ENCODE measurements at regions of chr2 and their contacts with region 1.

Region 1: DNA sequence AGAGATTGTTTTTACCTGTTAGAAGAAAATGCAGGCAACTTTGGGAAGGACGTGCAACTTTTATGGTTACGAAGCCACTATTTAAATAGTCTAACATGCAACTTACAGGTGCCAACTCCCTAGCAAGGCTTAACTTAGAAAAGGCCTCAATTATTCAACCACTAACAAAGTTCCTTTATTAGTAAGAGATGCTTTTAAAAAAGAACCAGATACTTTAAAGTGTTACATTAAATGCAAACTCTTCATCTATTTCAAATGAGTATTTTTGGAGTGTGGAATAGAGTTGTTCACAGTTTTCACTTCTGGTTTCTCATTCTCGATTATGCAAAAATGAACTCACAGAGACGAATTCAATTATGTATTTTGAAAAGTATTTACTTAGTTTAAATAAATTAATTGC is 51.7 kb downstream of the PELI1 start:
- DNase-seq: peak; percentile 26
- ATAC-seq: no peak
- H3K4me3 ChIP-seq: peak overlapping the region in 2 of 5 experiments; percentile 6 to 38
- H3K4me3 Mint-ChIP-seq: peak overlapping the region; percentile 66
- H3K27ac ChIP-seq: peak overlapping the region; percentile 54 to 66
- H3K27ac Mint-ChIP-seq: peak overlapping the region; percentile 75
- H3K4me1 ChIP-seq: peaks cover 39 to 40% of the 10 kb centered on the region in 2 donors
- H3K4me1 Mint-ChIP-seq: peaks cover 58% of the 10 kb centered on the region
- H3K27me3 ChIP-seq: no peaks in the 10 kb centered on the region
- H3K27me3 Mint-ChIP-seq: no peaks in the 10 kb centered on the region
- CTCF ChIP-seq: no peak

Region 2: GRCh38 chr2:64035072-64035942 is 57.2 kb before region 1 on chr2:
- CTCF ChIA-PET with region 1: no interaction called
- POLR2A ChIA-PET with region 1: no interaction called
- intact Hi-C with region 1: no loop called
- DNase-seq: no peak
- ATAC-seq: no peak
- H3K4me3 ChIP-seq: no peak overlapping the region
- H3K4me3 Mint-ChIP-seq: no peak overlapping the region
- H3K27ac ChIP-seq: no peak overlapping the region
- H3K27ac Mint-ChIP-seq: no peak overlapping the region
- H3K4me1 ChIP-seq: peaks cover 5% of the 10 kb centered on the region in 2 donors
- H3K4me1 Mint-ChIP-seq: peaks cover 9% of the 10 kb centered on the region
- H3K27me3 ChIP-seq: no peaks in the 10 kb centered on the region
- H3K27me3 Mint-ChIP-seq: no peaks in the 10 kb centered on the region
- CTCF ChIP-seq: no peak

Region 3: DNA sequence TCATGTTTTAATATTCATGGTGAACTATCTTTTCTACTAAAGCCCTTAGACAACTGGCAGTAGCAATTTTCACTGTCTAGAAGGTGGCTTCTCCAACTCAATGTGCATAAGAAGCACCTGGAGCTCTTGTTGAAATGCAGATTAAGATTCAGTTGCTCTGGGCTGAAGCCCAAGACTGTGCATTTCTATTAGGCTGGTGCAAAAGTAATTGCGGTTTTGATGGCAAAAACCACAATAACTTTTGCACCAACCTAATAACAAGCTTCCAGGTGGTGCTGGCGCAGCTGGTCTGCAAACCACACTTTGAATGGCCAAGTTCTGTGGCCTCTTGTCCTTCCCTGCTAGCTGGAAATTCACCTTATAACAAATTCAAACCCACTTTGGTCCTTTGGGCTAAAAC is 46.6 kb before region 1 on chr2:
- CTCF ChIA-PET with region 1: interaction called, 7 read pairs
- POLR2A ChIA-PET with region 1: no interaction called
- intact Hi-C with region 1: loop called (anchors 5 kb)
- DNase-seq: no peak
- ATAC-seq: no peak
- H3K4me3 ChIP-seq: no peak overlapping the region
- H3K4me3 Mint-ChIP-seq: no peak overlapping the region
- H3K27ac ChIP-seq: no peak overlapping the region
- H3K27ac Mint-ChIP-seq: no peak overlapping the region
- H3K4me1 ChIP-seq: peaks cover 6 to 9% of the 10 kb centered on the region in 2 donors
- H3K4me1 Mint-ChIP-seq: peaks cover 8% of the 10 kb centered on the region
- H3K27me3 ChIP-seq: no peaks in the 10 kb centered on the region
- H3K27me3 Mint-ChIP-seq: no peaks in the 10 kb centered on the region
- CTCF ChIP-seq: no peak

Region 4: DNA sequence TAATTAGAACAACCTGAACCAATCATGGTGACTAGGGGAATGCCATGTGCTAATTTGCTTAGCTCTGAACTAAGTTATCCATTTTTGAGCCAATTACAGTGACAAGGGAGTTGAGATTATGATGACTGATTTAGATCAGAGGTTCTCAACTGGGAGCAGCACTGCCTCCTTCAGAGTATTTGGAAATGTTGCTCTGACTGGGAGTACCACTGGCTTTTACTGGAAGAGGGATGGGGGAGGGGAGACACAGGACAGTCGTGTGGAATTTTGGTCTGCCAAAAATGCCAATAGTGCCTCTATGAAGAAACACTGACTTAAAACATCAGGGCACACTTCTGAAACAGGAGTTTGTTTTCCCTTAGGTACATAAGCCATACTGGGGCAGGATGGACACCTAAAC is 25.2 kb before region 1 on chr2:
- CTCF ChIA-PET with region 1: interaction called, 4 read pairs
- POLR2A ChIA-PET with region 1: interaction called, 10 read pairs
- intact Hi-C with region 1: no loop called
- DNase-seq: no peak
- ATAC-seq: no peak
- H3K4me3 ChIP-seq: no peak overlapping the region
- H3K4me3 Mint-ChIP-seq: no peak overlapping the region
- H3K27ac ChIP-seq: no peak overlapping the region
- H3K27ac Mint-ChIP-seq: no peak overlapping the region
- H3K4me1 ChIP-seq: no peaks in the 10 kb centered on the region
- H3K4me1 Mint-ChIP-seq: peaks cover 16% of the 10 kb centered on the region
- H3K27me3 ChIP-seq: no peaks in the 10 kb centered on the region
- H3K27me3 Mint-ChIP-seq: no peaks in the 10 kb centered on the region
- CTCF ChIP-seq: no peak

Measured in B cell (primary cell).